Adrenal gland (tissue), 19 donors: ENCODE measurements at regions of chr4 and their contacts with region 1.

Region 1: DNA sequence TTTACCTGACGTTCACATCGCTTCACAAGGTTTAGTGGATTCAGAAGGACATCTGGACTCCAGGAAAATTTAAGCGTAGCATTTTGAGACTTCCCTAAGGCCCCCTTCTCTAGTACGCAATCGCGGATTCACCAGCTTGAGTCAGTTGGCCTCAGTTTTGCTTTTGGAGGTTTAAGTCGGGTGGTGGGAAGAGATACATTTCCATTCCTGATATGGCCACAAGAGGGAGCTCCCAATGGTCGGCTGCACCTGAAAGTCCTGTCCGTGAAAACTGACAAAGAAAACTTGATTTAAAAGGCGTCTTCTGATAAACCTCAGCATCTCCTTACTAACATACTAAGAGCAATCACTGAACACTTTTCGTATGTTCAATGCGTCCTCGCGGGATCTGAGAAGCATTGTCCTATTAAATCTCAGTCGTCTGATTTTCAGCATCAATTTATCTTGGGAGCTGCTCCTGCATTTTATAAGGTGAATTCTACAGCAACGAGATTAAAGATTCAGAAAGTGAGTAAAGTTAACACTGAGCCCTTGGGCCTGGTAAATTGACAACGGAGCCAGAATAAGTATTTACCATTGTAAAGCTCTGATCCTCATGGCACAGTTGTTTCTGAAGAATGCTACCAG is 50.6 kb downstream of the LGI2 start:
- DNase-seq: peak; percentile 61 to 84 (median 67)
- H3K4me3 ChIP-seq: peak overlapping the region in 1 of 4 donors; percentile 24
- H3K27ac ChIP-seq: peak overlapping the region; percentile 20 to 79 (median 38)
- H3K4me1 ChIP-seq: peaks cover 0 to 19% of the 10 kb centered on the region in 2 donors
- H3K27me3 ChIP-seq: no peaks in the 10 kb centered on the region
- CTCF ChIP-seq: peak; percentile 78 to 93 (median 84)
- POLR2A ChIP-seq: no peak

Region 2: DNA sequence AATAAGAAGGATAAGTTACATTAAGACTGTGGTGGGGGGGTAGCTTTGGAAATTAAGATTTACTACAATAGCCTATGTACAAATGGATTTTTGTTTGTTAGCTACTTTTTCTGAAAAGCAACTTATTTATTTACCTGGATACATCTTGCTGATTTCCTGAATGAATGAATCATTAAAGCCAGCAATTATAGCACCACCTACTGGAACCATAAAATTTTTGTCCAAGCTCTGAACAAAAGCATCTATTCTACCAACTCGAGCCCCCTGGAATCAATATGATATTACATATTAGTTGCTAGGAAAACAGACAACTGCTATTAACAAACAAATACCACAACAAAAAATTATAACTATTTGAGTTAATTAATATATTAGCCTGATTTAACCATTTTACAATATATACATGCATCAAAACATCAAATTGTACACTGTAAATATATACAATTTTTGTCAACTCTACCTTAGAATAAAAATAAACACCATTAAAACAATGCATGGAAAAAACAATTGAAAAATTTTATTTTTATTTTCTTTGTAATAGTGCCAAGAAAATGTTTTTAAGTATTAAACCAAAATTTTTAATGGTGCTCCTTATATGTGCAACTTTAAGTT is 164.8 kb after region 1 on chr4:
- intact Hi-C with region 1: loop called in 1 of 2 experiments (anchors 5 kb)
- DNase-seq: no peak
- H3K4me3 ChIP-seq: no peak overlapping the region
- H3K27ac ChIP-seq: no peak overlapping the region
- H3K4me1 ChIP-seq: no peaks in the 10 kb centered on the region
- H3K27me3 ChIP-seq: no peaks in the 10 kb centered on the region
- CTCF ChIP-seq: peak; percentile 20 to 72 (median 50)
- POLR2A ChIP-seq: no peak